Activated B cell treated with CpG ODN at 0.5 μM for 24 hours (primary cell): ENCODE measurements at regions of chr21 and their contacts with region 1.

Region 1: DNA sequence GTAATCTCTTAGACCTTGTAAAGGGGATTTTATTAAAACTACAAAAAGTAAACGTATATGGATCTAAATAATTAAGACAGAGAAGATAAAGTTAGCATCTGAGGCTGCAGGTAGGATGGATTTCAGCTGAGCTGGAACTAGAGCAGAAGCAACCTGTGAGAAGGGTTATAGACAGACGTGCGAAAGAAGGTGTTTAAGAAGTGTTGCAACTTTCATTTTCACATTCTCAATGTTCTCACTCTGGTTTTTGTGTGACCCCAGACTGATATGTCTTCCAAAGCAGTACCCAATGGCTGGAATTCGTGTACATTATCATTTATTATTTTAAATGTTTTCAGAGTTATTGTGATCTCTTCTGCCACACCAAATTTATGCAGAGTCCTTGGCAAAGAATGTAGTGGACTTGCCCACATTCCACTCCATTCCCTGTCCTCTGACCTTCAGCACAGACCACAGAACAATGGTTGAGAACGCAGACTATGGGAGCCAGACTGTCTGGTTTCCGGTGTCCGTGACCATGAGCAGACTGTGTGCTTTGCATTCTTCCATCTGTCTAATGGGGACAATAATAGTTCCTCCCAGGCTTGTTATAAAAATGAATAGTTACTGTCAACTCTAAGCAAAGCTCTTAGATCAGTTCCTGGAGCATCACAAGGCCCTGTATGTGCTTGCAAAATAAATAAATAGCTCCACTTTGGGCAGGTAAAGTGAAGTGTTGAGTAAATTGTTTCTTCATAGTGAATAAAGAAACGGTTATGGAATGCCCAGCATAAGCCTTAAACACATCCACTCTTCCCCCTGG is 140.6 kb upstream of the SAMSN1 start:
- DNase-seq: no peak
- ATAC-seq: peak; percentile 35
- H3K4me3 Mint-ChIP-seq: peak overlapping the region; percentile 30
- H3K27ac Mint-ChIP-seq: peak overlapping the region; percentile 82
- H3K4me1 Mint-ChIP-seq: peaks cover 73% of the 10 kb centered on the region
- H3K27me3 Mint-ChIP-seq: no peaks in the 10 kb centered on the region
- CTCF ChIP-seq: no peak

Region 2: DNA sequence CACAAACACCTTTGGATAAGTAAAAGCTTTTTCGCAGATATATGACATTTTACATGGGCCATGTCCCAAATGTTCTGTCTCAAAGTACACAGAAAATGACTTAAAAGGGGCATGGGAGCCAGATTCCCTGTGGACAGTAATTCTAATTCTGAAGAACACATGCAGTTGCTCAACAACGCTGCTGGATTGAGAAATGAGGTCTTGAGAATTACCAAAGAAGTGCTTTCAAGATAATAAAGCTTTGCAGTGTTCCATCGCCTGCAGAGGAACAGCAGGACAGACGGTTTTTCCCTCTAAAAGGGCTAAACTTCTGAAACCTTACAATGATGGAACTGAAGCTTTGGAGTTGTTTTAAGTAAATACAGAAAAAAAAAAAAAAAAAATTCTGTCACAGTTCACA is 248.5 kb before region 1 on chr21:
- CTCF ChIA-PET with region 1: no interaction called
- POLR2A ChIA-PET with region 1: no interaction called
- intact Hi-C with region 1: no loop called
- DNase-seq: no peak
- ATAC-seq: no peak
- H3K4me3 Mint-ChIP-seq: no peak overlapping the region
- H3K27ac Mint-ChIP-seq: no peak overlapping the region
- H3K4me1 Mint-ChIP-seq: no peaks in the 10 kb centered on the region
- H3K27me3 Mint-ChIP-seq: peaks cover 3% of the 10 kb centered on the region
- CTCF ChIP-seq: no peak

Region 3: GRCh38 chr21:14554948-14555347 is 131.7 kb before region 1 on chr21:
- CTCF ChIA-PET with region 1: no interaction called
- POLR2A ChIA-PET with region 1: interaction called, 14 read pairs
- intact Hi-C with region 1: no loop called
- DNase-seq: no peak
- ATAC-seq: no peak
- H3K4me3 Mint-ChIP-seq: no peak overlapping the region
- H3K27ac Mint-ChIP-seq: peak overlapping the region; percentile 59
- H3K4me1 Mint-ChIP-seq: peaks cover 65% of the 10 kb centered on the region
- H3K27me3 Mint-ChIP-seq: no peaks in the 10 kb centered on the region
- CTCF ChIP-seq: no peak

Region 4: GRCh38 chr21:14630556-14631069 is 56.1 kb before region 1 on chr21:
- CTCF ChIA-PET with region 1: no interaction called
- POLR2A ChIA-PET with region 1: interaction called, 3 read pairs
- intact Hi-C with region 1: loop called (anchors 2 kb)
- DNase-seq: no peak
- ATAC-seq: peak; percentile 75
- H3K4me3 Mint-ChIP-seq: no peak overlapping the region
- H3K27ac Mint-ChIP-seq: peak overlapping the region; percentile 24
- H3K4me1 Mint-ChIP-seq: peaks cover 16% of the 10 kb centered on the region
- H3K27me3 Mint-ChIP-seq: no peaks in the 10 kb centered on the region
- CTCF ChIP-seq: no peak

Region 5: DNA sequence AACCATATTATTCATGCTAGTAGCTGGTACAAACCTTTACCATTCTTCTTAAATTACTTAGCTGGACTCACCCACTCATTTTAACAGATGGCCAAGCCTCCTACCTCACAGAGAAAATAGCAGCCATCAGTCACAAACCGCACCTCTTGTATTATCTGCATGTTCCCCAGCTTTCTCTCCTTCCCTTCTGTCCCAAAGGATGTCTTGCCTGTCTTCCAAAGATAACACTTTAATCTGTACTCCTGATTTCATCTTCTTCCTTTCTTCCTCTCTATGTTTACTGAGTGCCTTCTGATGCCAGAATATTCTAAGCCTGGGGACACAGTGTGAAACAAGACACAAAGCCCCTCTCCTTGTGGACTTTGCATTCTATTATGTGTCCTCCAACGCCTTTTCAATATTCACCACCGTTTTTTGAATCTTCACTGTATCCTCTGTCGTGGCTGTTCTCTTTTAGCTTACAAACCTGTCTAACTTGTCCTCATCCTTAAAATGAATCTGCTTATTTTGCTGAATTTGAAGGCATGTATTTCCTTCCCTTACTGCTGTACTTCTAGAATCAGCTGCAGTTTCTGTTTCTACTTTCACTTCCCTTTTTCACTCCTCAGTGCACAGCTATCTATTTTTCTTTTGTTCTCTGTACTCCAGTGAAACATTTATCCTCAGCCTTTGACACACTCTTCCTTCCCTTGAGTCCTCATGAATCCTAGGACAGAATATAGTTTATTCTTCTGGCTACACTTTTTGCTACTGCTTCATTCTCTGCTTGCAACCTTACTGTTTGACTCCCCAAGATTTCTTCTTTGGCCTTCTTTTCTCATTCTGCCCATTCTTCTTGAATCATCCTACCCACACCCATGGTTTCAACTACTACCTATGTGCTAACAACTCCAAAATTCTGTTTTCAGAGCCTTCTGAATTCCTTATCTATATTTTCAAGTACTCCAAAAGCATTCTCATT is 76.3 kb after region 1 on chr21:
- CTCF ChIA-PET with region 1: no interaction called
- POLR2A ChIA-PET with region 1: interaction called, 11 read pairs
- intact Hi-C with region 1: loop called (anchors 2 kb)
- DNase-seq: no peak
- ATAC-seq: peak; percentile 95
- H3K4me3 Mint-ChIP-seq: no peak overlapping the region
- H3K27ac Mint-ChIP-seq: no peak overlapping the region
- H3K4me1 Mint-ChIP-seq: peaks cover 33% of the 10 kb centered on the region
- H3K27me3 Mint-ChIP-seq: no peaks in the 10 kb centered on the region
- CTCF ChIP-seq: no peak

Region 6: DNA sequence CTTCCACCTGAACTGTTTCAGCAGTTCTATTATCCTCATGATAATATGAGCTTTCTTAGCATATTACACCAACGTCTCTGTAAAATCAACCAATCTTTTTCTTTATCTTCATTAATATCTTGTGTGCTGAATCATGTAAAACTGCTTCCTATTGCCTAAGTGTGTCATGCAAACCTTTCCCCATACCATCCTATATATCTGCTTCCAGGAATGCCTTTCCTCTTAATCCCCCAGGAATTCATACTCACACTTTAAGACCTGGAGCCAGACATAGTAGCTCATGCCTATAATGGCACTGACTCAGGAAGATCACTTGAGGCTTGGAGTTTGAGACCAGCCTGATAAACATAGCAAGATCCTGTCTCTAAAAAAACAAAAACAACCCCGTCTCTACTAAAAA is 194.3 kb after region 1 on chr21:
- CTCF ChIA-PET with region 1: no interaction called
- POLR2A ChIA-PET with region 1: no interaction called
- intact Hi-C with region 1: no loop called
- DNase-seq: no peak
- ATAC-seq: no peak
- H3K4me3 Mint-ChIP-seq: no peak overlapping the region
- H3K27ac Mint-ChIP-seq: no peak overlapping the region
- H3K4me1 Mint-ChIP-seq: peaks cover 58% of the 10 kb centered on the region
- H3K27me3 Mint-ChIP-seq: no peaks in the 10 kb centered on the region
- CTCF ChIP-seq: no peak